Activated naive CD4-positive, alpha-beta T cell treated with anti-CD3 and anti-CD28 coated beads, Interleukin-2, amount 10 ng/mL, durations not matched to agents 7 days and 5 days (primary cell): ENCODE measurements at regions of chr18 and their contacts with region 1.

Region 1: DNA sequence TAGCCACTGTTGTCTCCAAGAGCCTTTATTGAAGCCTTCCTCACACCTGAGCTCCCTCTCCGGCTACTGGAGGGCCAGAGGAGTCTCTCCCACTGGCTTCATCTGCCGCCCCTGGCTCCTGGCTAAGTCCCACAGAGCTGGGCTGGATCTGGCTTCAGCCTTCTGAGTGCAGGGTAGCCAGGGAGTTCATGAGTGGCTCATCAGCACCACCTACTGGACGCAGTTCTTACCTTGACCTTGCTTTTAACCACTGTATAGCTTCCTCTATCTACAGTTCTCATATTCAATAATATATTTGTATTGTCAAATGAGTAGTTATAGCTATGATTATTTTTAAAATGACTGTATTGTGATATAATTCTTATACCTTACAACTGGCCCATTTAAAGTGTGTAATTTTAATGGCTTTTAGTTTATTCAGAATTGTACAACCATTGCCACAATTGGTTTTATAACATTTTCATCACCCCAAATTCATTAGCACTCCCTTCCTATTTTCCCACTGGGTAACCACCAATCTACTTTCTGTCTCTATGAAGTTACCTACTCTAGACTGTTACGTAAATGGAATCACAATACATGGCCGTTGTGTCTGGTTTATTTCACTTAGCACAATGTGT is 17.7 kb downstream of the CNDP1 start:
- DNase-seq: peak; percentile 87
- H3K4me3 Mint-ChIP-seq: no peak overlapping the region
- H3K27ac Mint-ChIP-seq: no peak overlapping the region
- H3K4me1 Mint-ChIP-seq: no peaks in the 10 kb centered on the region
- H3K27me3 Mint-ChIP-seq: peaks cover 30% of the 10 kb centered on the region

Region 2: DNA sequence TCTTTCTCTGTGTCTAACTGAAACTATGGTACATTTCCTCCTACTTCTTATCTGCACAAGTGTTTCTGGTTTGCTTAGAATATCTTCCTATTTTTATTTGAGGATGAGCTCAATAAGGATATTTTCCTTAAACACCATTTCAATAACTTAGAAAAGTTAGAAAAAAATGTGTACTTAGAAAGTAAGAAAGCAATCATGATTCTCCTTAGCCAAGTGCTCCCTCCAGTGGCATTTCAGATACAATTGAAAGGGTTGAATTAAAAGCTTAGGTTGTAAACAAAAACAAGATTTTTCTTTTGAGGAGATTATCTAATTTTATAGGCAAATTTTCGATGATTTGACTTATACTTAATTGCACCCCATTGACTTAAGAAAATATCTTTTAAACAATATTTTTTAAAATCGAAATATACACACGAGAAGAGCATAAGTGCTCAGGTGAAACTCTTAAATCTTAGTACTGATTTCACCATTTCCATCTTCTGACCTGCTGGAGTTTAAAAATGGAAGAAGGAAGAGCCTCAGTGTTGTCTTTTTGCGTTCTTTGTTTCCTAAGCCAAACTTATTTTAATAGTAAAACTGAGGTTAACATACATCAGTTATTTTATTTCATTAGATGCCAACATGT is 209.5 kb before region 1 on chr18:
- CTCF ChIA-PET with region 1: interaction called, 12 read pairs
- DNase-seq: peak; percentile 47
- H3K4me3 Mint-ChIP-seq: no peak overlapping the region
- H3K27ac Mint-ChIP-seq: no peak overlapping the region
- H3K4me1 Mint-ChIP-seq: no peaks in the 10 kb centered on the region
- H3K27me3 Mint-ChIP-seq: peaks cover 12% of the 10 kb centered on the region

Region 3: DNA sequence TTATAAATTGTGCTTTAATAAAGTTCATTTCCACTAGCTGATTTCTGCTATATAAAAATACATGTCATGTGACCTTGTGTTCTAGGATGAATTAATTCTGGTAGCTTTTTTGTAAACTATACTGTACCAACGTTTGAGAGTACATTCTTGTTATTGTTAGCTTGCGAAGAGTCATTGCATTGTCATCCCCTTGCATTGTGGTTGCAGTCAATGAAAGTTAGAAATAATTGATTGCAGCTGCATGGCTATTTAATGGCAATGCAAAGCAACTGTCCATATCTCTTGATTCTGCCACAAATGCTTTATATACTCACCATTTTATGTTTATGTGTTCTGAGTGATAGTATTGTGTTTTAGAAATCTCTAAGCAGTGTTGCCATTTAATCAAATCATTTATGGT is 137.2 kb after region 1 on chr18:
- CTCF ChIA-PET with region 1: no interaction called
- DNase-seq: no peak
- H3K4me3 Mint-ChIP-seq: no peak overlapping the region
- H3K27ac Mint-ChIP-seq: no peak overlapping the region
- H3K4me1 Mint-ChIP-seq: peaks cover 14% of the 10 kb centered on the region
- H3K27me3 Mint-ChIP-seq: no peaks in the 10 kb centered on the region

Region 4: GRCh38 chr18:74806700-74807416 is 254.8 kb after region 1 on chr18:
- CTCF ChIA-PET with region 1: no interaction called
- DNase-seq: no peak
- H3K4me3 Mint-ChIP-seq: no peak overlapping the region
- H3K27ac Mint-ChIP-seq: no peak overlapping the region
- H3K4me1 Mint-ChIP-seq: no peaks in the 10 kb centered on the region
- H3K27me3 Mint-ChIP-seq: no peaks in the 10 kb centered on the region